SK-N-SH (cell line): ENCODE measurements at regions of chr14 and their contacts with region 1.

Region 1: GRCh38 chr14:100246826-100247428 is 8.0 kb downstream of the YY1 start:
- DNase-seq: peak; percentile 74
- H3K4me3 ChIP-seq: peak overlapping the region in 1 of 2 experiments; percentile 46; a peak in 1 of 4 replicates
- H3K27ac ChIP-seq: no peak overlapping the region
- H3K4me1 ChIP-seq: peaks cover 13 to 23% of the 10 kb centered on the region in 2 experiments; a peak in 3 of 4 replicates
- H3K27me3 ChIP-seq: no peaks in the 10 kb centered on the region
- CTCF ChIP-seq: peak; percentile 75
- EP300 ChIP-seq: no peak
- RAD21 ChIP-seq: peak; percentile 52

Region 2: GRCh38 chr14:100176816-100177327 is 70.1 kb before region 1 on chr14:
- CTCF ChIA-PET with region 1: no interaction called
- POLR2A ChIA-PET with region 1: no interaction called
- DNase-seq: no peak
- H3K4me3 ChIP-seq: no peak overlapping the region
- H3K27ac ChIP-seq: no peak overlapping the region
- H3K4me1 ChIP-seq: no peaks in the 10 kb centered on the region; a peak in 1 of 4 replicates
- H3K27me3 ChIP-seq: 0 out of 2 replicates have a peak, but pooled peaks cover 5% of the 10 kb centered on the region
- CTCF ChIP-seq: no peak
- EP300 ChIP-seq: no peak
- RAD21 ChIP-seq: no peak

Region 3: DNA sequence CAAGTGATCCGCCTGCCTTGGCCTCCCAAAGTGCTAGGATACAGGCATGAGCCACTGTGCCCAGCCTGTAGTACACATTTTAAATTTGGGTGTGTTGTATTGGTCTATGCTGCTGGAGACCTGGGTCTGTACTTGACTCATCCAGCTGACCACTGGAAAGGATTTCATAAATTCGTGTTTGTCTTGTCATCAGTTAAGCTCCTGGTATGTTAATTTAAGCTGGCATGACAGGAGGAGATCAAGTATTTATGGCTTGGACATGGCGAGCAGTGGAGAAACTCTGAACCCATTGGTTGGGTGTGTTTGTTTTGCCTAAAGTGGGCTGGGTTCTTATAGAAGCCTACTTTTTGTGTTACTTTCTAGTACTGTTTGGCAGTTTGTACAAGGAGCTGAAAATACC is 16.2 kb after region 1 on chr14:
- CTCF ChIA-PET with region 1: interaction called, 20 read pairs
- POLR2A ChIA-PET with region 1: no interaction called
- DNase-seq: no peak
- H3K4me3 ChIP-seq: no peak overlapping the region
- H3K27ac ChIP-seq: no peak overlapping the region
- H3K4me1 ChIP-seq: no peaks in the 10 kb centered on the region
- H3K27me3 ChIP-seq: no peaks in the 10 kb centered on the region
- CTCF ChIP-seq: no peak
- EP300 ChIP-seq: no peak
- RAD21 ChIP-seq: no peak

Region 4: GRCh38 chr14:100294213-100294962 is 47.5 kb after region 1 on chr14:
- CTCF ChIA-PET with region 1: no interaction called
- POLR2A ChIA-PET with region 1: no interaction called
- DNase-seq: no peak
- H3K4me3 ChIP-seq: no peak overlapping the region
- H3K27ac ChIP-seq: no peak overlapping the region
- H3K4me1 ChIP-seq: peaks cover 0 to 11% of the 10 kb centered on the region in 2 experiments; a peak in 1 of 4 replicates
- H3K27me3 ChIP-seq: no peaks in the 10 kb centered on the region
- CTCF ChIP-seq: no peak
- EP300 ChIP-seq: no peak
- RAD21 ChIP-seq: no peak

Region 5: DNA sequence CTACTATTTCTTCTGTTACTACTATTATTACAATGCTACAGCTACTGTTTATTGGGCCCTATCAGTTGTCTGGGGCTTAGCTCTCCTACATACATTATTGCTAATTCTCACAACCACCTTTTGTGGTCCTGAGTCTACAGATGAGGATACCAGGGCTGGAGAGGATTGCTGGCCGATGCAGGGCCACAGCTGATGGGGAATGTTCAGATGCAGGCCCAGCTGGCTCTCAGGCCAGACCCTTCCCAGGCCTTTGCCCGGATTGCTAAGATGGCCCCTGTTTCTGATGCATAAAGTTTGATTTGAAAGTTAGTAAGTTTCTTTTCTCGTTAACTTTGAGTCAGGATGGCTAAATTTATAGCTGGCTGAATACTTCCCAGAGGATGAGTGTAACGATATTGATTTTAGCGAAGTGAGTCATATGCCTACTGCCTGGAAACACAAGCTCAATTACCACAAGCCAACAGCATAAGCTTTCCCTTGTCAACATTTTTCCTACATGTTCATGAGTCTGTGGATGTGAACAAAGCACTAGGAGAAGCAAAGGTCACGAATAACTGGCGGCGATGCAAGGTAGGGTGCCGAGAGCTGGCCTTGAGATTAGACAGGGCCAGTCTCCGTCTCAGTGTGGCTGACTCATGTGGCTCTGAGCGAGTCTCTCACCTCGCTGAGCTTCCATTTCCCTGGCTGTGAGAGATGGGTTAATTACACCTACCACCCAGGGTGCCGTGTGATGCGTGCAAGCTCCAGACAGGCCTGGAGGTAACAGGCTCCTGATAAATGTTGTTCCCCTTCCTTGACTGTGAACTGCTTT is 229.3 kb after region 1 on chr14:
- CTCF ChIA-PET with region 1: no interaction called
- POLR2A ChIA-PET with region 1: no interaction called
- DNase-seq: no peak
- H3K4me3 ChIP-seq: peak overlapping the region in 1 of 2 experiments; percentile 16; a peak in 1 of 4 replicates
- H3K27ac ChIP-seq: peak overlapping the region; percentile 51 to 99
- H3K4me1 ChIP-seq: peaks cover 12 to 58% of the 10 kb centered on the region in 2 experiments
- H3K27me3 ChIP-seq: no peaks in the 10 kb centered on the region
- CTCF ChIP-seq: no peak
- EP300 ChIP-seq: peak in 1 of 2 experiments; percentile 90; a peak in 2 of 4 replicates
- RAD21 ChIP-seq: no peak